CD8-positive, alpha-beta T cell (primary cell): ENCODE measurements at regions of chr7 and their contacts with region 1.

Region 1: GRCh38 chr7:79912213-79912633 is 222.4 kb upstream of the GNAI1 start:
- DNase-seq: peak in 1 of 9 experiments; percentile 50
- ATAC-seq: peak; percentile 71
- H3K4me3 ChIP-seq: peak overlapping the region in 1 of 2 experiments; percentile 13
- H3K4me3 Mint-ChIP-seq: peak overlapping the region; percentile 62
- H3K27ac ChIP-seq: peak overlapping the region in 1 of 2 experiments; percentile 43
- H3K27ac Mint-ChIP-seq: peak overlapping the region; percentile 82
- H3K4me1 ChIP-seq: peaks cover 56% of the 10 kb centered on the region
- H3K4me1 Mint-ChIP-seq: peaks cover 73% of the 10 kb centered on the region
- H3K27me3 ChIP-seq: no peaks in the 10 kb centered on the region
- H3K27me3 Mint-ChIP-seq: no peaks in the 10 kb centered on the region
- CTCF ChIP-seq: no peak

Region 2: GRCh38 chr7:79272066-79272669 is 640.1 kb before region 1 on chr7:
- CTCF ChIA-PET with region 1: no interaction called
- POLR2A ChIA-PET with region 1: no interaction called
- intact Hi-C with region 1: loop called in 1 of 2 experiments (anchors 5 kb)
- DNase-seq: peak in 1 of 9 experiments; percentile 26
- ATAC-seq: no peak
- H3K4me3 ChIP-seq: no peak overlapping the region
- H3K4me3 Mint-ChIP-seq: no peak overlapping the region
- H3K27ac ChIP-seq: no peak overlapping the region
- H3K27ac Mint-ChIP-seq: no peak overlapping the region
- H3K4me1 ChIP-seq: no peaks in the 10 kb centered on the region
- H3K4me1 Mint-ChIP-seq: no peaks in the 10 kb centered on the region
- H3K27me3 ChIP-seq: no peaks in the 10 kb centered on the region
- H3K27me3 Mint-ChIP-seq: no peaks in the 10 kb centered on the region
- CTCF ChIP-seq: peak; percentile 57

Region 3: GRCh38 chr7:79298145-79298760 is 614.0 kb before region 1 on chr7:
- CTCF ChIA-PET with region 1: no interaction called
- POLR2A ChIA-PET with region 1: no interaction called
- intact Hi-C with region 1: loop called (anchors 2 to 5 kb)
- DNase-seq: peak in 2 of 9 experiments; percentile 3 to 14
- ATAC-seq: no peak
- H3K4me3 ChIP-seq: no peak overlapping the region
- H3K4me3 Mint-ChIP-seq: no peak overlapping the region
- H3K27ac ChIP-seq: no peak overlapping the region
- H3K27ac Mint-ChIP-seq: no peak overlapping the region
- H3K4me1 ChIP-seq: no peaks in the 10 kb centered on the region
- H3K4me1 Mint-ChIP-seq: no peaks in the 10 kb centered on the region
- H3K27me3 ChIP-seq: no peaks in the 10 kb centered on the region
- H3K27me3 Mint-ChIP-seq: no peaks in the 10 kb centered on the region
- CTCF ChIP-seq: peak; percentile 53

Region 4: GRCh38 chr7:79806161-79806734 is 106.0 kb before region 1 on chr7:
- CTCF ChIA-PET with region 1: no interaction called
- POLR2A ChIA-PET with region 1: no interaction called
- intact Hi-C with region 1: loop called in 1 of 2 experiments (anchors 5 kb)
- DNase-seq: peak in 1 of 9 experiments; percentile 1
- ATAC-seq: no peak
- H3K4me3 ChIP-seq: no peak overlapping the region
- H3K4me3 Mint-ChIP-seq: no peak overlapping the region
- H3K27ac ChIP-seq: no peak overlapping the region
- H3K27ac Mint-ChIP-seq: no peak overlapping the region
- H3K4me1 ChIP-seq: no peaks in the 10 kb centered on the region
- H3K4me1 Mint-ChIP-seq: no peaks in the 10 kb centered on the region
- H3K27me3 ChIP-seq: no peaks in the 10 kb centered on the region
- H3K27me3 Mint-ChIP-seq: no peaks in the 10 kb centered on the region
- CTCF ChIP-seq: no peak

Region 5: DNA sequence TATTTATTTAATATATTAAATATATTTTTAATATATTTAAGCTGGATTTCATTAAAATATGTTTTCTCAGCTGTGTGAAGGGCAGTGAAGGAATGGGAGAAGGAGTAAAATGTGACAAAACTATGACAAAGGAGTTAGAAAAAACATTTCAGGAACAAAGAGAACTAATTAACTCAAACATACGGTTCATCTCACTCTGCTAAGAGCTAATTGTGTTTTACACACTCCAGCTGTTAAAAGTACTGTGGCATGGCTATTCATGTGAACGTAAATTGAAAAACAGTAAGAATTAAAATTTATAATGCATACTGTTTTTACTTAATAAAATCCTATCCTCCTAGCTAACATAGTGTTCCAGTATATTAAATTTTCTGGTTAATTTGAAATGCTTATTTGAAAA is 40.0 kb before region 1 on chr7:
- CTCF ChIA-PET with region 1: no interaction called
- POLR2A ChIA-PET with region 1: no interaction called
- intact Hi-C with region 1: loop called in 1 of 2 experiments (anchors 5 kb)
- DNase-seq: no peak
- ATAC-seq: no peak
- H3K4me3 ChIP-seq: no peak overlapping the region
- H3K4me3 Mint-ChIP-seq: no peak overlapping the region
- H3K27ac ChIP-seq: no peak overlapping the region
- H3K27ac Mint-ChIP-seq: no peak overlapping the region
- H3K4me1 ChIP-seq: no peaks in the 10 kb centered on the region
- H3K4me1 Mint-ChIP-seq: peaks cover 5% of the 10 kb centered on the region
- H3K27me3 ChIP-seq: no peaks in the 10 kb centered on the region
- H3K27me3 Mint-ChIP-seq: no peaks in the 10 kb centered on the region
- CTCF ChIP-seq: no peak

Region 6: GRCh38 chr7:79973455-79973854 is 61.2 kb after region 1 on chr7:
- CTCF ChIA-PET with region 1: no interaction called
- POLR2A ChIA-PET with region 1: interaction called, 4 read pairs
- intact Hi-C with region 1: loop called in 1 of 2 experiments (anchors 5 kb)
- DNase-seq: no peak
- ATAC-seq: no peak
- H3K4me3 ChIP-seq: no peak overlapping the region
- H3K4me3 Mint-ChIP-seq: no peak overlapping the region
- H3K27ac ChIP-seq: no peak overlapping the region
- H3K27ac Mint-ChIP-seq: no peak overlapping the region
- H3K4me1 ChIP-seq: peaks cover 6% of the 10 kb centered on the region
- H3K4me1 Mint-ChIP-seq: peaks cover 11% of the 10 kb centered on the region
- H3K27me3 ChIP-seq: no peaks in the 10 kb centered on the region
- H3K27me3 Mint-ChIP-seq: no peaks in the 10 kb centered on the region
- CTCF ChIP-seq: no peak

Region 7: DNA sequence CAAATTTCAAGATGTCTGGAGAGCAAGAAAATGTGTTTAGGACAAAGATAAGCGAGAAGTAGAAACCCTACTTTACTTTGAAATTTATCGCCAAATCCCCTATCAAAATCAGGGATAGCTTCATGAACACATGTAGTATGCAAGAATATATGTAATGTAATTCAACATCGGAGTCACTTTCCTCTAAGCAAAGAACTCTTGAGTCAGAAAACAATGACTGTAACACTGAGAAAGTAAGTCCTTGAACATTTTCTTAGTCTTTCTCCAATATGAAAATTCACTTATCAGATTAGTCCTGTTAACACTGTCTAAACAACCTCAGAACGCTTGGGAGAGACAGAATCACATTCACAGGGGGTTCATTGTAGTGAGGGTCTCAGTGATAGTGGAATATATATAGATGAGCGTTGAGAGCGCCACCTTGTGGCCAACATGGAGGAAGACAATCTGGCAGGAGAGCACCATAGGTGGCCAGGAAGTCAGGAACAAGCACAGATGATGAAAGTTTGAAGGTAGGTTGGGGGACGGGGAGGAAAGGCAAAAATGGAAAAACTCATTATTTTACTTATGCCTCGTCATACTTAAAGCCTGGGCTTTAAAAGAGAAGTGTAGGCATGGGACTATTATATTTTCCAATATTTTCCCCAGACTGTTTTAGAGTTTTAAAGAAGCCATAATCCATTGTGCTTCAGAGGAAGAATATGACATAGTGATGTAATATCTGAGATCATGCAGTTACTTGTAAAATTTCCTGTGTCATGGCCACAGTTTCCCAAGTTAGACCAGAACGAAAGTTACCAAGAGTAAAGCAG is 106.9 kb after region 1 on chr7:
- CTCF ChIA-PET with region 1: interaction called, 4 read pairs
- POLR2A ChIA-PET with region 1: no interaction called
- intact Hi-C with region 1: loop called in 1 of 2 experiments (anchors 2 kb)
- DNase-seq: peak in 8 of 9 experiments; percentile 21 to 68 (median 41)
- ATAC-seq: peak; percentile 71
- H3K4me3 ChIP-seq: no peak overlapping the region
- H3K4me3 Mint-ChIP-seq: no peak overlapping the region
- H3K27ac ChIP-seq: no peak overlapping the region
- H3K27ac Mint-ChIP-seq: no peak overlapping the region
- H3K4me1 ChIP-seq: peaks cover 5% of the 10 kb centered on the region
- H3K4me1 Mint-ChIP-seq: no peaks in the 10 kb centered on the region
- H3K27me3 ChIP-seq: no peaks in the 10 kb centered on the region
- H3K27me3 Mint-ChIP-seq: peaks cover 2% of the 10 kb centered on the region
- CTCF ChIP-seq: peak; percentile 67